H1 (cell line): ENCODE measurements at regions of chr5 and their contacts with region 1.

Region 1: GRCh38 chr5:163473635-163474243 is 13.3 kb downstream of the HMMR start:
- DNase-seq: no peak
- H3K4me3 ChIP-seq: no peak overlapping the region
- H3K27ac ChIP-seq: no peak overlapping the region
- H3K4me1 ChIP-seq: no peaks in the 10 kb centered on the region
- H3K27me3 ChIP-seq: no peaks in the 10 kb centered on the region
- CTCF ChIP-seq: no peak
- EP300 ChIP-seq: no peak
- POLR2A ChIP-seq: no peak
- RAD21 ChIP-seq: no peak

Region 2: DNA sequence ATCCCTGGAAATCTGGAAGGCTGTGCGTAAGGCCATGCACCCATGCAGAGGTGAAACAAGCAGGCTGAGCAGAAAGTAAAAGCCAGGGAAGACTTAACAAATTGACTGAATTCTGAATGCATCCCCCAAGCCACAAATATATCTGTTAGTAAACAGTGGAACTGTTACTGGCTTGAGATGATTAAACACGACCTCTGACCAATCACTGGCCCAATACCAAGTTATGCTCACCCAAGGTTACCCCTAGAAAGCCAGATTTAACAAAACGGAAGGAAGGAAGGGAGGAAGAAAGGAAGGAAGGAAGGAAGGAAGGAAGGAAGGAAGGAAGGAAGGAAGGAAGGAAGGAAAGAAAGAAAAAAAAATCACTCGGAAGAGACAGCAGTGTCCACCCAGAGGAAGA is 252.2 kb before region 1 on chr5:
- CTCF ChIA-PET with region 1: no interaction called
- POLR2A ChIA-PET with region 1: no interaction called
- DNase-seq: no peak
- H3K4me3 ChIP-seq: no peak overlapping the region
- H3K27ac ChIP-seq: no peak overlapping the region
- H3K4me1 ChIP-seq: no peaks in the 10 kb centered on the region
- H3K27me3 ChIP-seq: no peaks in the 10 kb centered on the region
- CTCF ChIP-seq: no peak
- EP300 ChIP-seq: no peak
- POLR2A ChIP-seq: no peak
- RAD21 ChIP-seq: no peak

Region 3: DNA sequence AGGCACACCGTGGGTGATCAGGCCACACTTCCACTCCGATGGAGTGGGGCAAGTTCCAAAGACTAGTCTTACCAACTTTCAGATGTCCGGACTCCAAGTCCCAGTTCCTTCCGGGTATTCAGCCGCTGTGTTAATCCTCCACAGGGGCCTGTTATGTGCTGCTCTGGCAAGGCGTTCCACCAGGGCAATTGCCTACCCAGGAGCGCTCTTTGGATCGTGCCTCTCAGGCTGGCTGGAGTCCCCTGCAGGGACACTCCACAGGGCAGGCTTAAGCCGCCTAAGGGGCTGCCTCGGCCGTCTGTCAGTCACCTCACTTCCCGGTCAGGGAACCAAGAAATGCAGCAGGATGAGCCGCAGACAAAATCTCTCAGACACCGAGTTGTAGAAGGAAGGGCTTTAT is 155.0 kb before region 1 on chr5:
- CTCF ChIA-PET with region 1: no interaction called
- POLR2A ChIA-PET with region 1: no interaction called
- DNase-seq: no peak
- H3K4me3 ChIP-seq: no peak overlapping the region
- H3K27ac ChIP-seq: no peak overlapping the region
- H3K4me1 ChIP-seq: no peaks in the 10 kb centered on the region
- H3K27me3 ChIP-seq: no peaks in the 10 kb centered on the region
- CTCF ChIP-seq: no peak
- EP300 ChIP-seq: no peak
- POLR2A ChIP-seq: no peak
- RAD21 ChIP-seq: no peak

Region 4: DNA sequence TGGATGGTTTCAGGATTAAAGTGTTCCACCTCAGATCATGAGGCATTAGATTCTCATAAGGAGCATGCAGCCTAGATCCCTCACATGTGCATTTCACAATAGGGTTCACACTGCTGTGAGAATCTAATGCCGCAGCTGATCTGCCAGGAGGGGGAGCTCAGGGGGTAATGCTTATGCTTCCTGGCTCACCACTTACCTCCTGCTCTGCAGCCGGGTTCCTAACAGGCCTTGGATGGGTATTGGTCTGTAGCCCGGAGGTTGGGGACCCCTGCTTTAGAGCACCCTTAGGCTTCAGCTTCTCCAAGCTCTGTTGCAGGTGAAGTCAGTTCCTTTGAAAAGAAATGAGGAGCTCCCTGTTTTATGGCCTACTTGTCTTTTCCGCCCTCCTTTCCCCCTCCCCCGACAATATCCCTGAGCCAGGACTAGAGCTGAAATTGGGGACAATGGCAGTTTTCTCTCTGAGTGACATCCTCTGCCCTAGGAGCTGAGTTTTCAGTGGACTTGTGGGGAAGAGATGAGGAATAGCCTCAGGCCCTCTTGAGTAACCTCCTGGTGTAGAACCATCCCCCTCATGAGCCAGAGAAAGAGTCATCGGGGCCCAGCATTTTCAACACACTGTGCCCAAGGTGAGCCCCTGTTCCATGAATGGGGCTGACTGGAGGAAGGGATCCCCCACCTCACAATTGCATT is 15.5 kb after region 1 on chr5:
- CTCF ChIA-PET with region 1: interaction called, 12 read pairs
- POLR2A ChIA-PET with region 1: no interaction called
- DNase-seq: peak in 1 of 2 experiments; percentile 63
- H3K4me3 ChIP-seq: no peak overlapping the region
- H3K27ac ChIP-seq: no peak overlapping the region
- H3K4me1 ChIP-seq: no peaks in the 10 kb centered on the region
- H3K27me3 ChIP-seq: no peaks in the 10 kb centered on the region
- CTCF ChIP-seq: peak; percentile 29 to 64 (median 49); a peak in 2 of 4 replicates
- EP300 ChIP-seq: no peak
- POLR2A ChIP-seq: no peak
- RAD21 ChIP-seq: peak; percentile 41 to 52